Heart left ventricle (tissue), 16 donors: ENCODE measurements at regions of chr3 and their contacts with region 1.

Region 1: DNA sequence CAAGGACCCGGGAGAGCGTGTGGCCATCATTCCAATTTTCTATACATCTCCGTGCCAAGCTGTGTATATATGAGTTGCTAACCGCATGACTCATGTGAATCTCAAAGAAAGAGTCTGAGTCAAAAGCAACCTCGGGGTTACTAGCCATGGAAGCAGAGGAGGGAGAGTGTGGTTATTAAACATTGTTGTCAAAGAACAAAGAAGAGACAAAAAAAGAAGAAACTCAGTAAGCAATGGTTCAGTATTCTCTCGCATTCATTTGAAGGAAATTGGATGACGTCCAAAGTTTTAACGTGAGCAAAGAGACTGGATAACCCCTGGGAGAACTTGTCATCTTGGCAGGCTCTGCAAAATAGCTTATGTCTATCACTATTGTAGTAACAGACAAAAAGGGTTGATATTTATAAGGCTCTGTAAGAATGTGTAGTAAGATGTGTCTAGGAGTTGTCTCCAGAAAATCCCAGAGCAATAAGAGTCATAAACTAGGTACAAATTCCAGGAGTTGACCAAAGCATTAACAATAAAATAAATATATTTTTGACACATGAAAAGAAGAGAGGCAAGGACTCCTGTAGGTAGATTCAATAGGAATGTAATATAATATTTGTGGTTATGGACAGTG is 52.8 kb upstream of the GRM7 start:
- DNase-seq: no peak
- ATAC-seq: no peak
- H3K4me3 ChIP-seq: no peak overlapping the region
- H3K27ac ChIP-seq: no peak overlapping the region
- H3K4me1 ChIP-seq: no peaks in the 10 kb centered on the region
- H3K27me3 ChIP-seq: peaks cover 0 to 5% (median 0%) of the 10 kb centered on the region in 9 donors
- CTCF ChIP-seq: no peak
- POLR2A ChIP-seq: no peak

Region 2: GRCh38 chr3:5226783-5227182 is 1581.3 kb before region 1 on chr3:
- intact Hi-C with region 1: loop called in 1 of 10 experiments (anchors 10 kb)
- DNase-seq: no peak
- ATAC-seq: no peak
- H3K4me3 ChIP-seq: no peak overlapping the region
- H3K27ac ChIP-seq: no peak overlapping the region
- H3K4me1 ChIP-seq: peaks cover 0 to 9% (median 0%) of the 10 kb centered on the region in 12 donors
- H3K27me3 ChIP-seq: peaks cover 0 to 3% (median 0%) of the 10 kb centered on the region in 9 donors
- CTCF ChIP-seq: peak in 10 of 12 donors; percentile 28 to 63 (median 40)
- POLR2A ChIP-seq: no peak